Activated naive CD4-positive, alpha-beta T cell treated with anti-CD3 and anti-CD28 coated beads, Interleukin-2, amount 10 ng/mL, durations not matched to agents 7 days and 5 days (primary cell): ENCODE measurements at regions of chr3 and their contacts with region 1.

Region 1: DNA sequence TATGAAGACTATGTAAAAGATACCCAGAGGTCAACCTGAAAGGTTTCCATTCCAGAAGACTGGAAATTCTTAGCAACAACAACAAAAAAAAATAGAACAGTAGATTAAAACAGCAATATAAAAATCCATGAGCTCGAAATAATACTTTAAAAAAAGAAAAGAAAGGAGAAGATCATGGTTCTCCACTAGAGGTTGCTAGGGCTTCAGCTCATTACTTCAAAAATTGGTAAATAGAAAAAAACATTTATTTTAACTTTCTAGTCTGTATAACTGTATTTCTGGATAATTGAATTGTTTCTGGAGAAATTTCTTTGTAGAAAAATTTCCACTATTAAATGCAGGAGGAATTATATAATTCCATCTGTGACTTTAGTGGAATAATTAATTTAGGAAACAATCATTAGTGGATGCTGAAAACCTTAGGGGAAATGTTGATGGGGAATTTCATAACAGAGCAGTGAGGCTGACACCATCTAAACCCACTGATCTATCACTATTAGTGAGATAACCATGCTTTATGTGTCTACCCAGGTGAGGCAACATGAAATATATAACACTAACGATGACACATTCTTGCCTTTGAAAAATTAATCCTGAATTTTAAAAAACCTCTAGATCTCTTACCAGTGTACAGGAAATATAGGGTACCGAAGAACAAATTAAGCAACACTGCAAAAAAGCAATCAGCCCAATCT is 62.5 kb upstream of the SNRK start:
- DNase-seq: no peak
- H3K4me3 Mint-ChIP-seq: no peak overlapping the region
- H3K27ac Mint-ChIP-seq: no peak overlapping the region
- H3K4me1 Mint-ChIP-seq: peaks cover 47% of the 10 kb centered on the region
- H3K27me3 Mint-ChIP-seq: no peaks in the 10 kb centered on the region

Region 2: DNA sequence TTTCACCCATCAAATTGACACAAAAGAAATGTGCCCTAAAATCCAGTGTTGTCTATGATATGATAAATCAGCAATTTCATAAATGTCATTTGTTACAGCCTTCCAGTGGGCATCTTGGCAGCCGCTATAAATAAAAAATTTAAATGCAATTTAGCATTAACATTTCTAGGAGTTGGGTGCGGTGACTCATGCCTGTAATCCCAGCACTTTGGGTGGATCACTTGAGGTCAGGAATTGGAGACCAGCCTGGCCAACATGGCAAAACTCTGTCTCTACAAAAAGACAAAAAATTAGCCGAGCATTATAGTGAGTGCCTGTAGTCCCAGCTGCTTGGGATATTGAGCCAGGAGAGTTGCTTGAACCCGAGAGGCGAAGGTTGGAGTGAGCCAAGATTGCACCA is 52.0 kb before region 1 on chr3:
- CTCF ChIA-PET with region 1: no interaction called
- DNase-seq: no peak
- H3K4me3 Mint-ChIP-seq: no peak overlapping the region
- H3K27ac Mint-ChIP-seq: no peak overlapping the region
- H3K4me1 Mint-ChIP-seq: peaks cover 11% of the 10 kb centered on the region
- H3K27me3 Mint-ChIP-seq: peaks cover 10% of the 10 kb centered on the region

Region 3: DNA sequence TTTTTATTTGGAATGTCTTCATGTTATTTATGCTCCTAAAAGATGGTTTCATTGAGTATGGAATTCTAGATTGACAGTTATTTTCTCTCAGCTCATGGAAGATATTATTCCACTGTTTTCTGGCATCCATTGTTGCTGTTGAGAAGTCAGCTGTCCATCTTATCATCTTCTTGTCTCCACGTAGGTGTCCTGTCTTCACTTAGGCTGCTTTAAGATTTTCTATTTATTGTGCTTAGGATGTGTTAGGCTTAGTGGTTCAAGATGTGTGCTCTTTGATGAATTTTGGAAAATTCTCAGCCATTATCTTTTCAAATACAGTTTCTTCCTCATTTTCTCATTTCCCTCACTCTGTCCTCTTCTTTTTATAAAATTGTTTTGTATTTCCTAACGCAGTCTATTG is 114.5 kb after region 1 on chr3:
- CTCF ChIA-PET with region 1: no interaction called
- DNase-seq: no peak
- H3K4me3 Mint-ChIP-seq: no peak overlapping the region
- H3K27ac Mint-ChIP-seq: no peak overlapping the region
- H3K4me1 Mint-ChIP-seq: peaks cover 16% of the 10 kb centered on the region
- H3K27me3 Mint-ChIP-seq: no peaks in the 10 kb centered on the region

Region 4: GRCh38 chr3:43503067-43503728 is 279.4 kb after region 1 on chr3:
- CTCF ChIA-PET with region 1: interaction called, 25 read pairs
- DNase-seq: no peak
- H3K4me3 Mint-ChIP-seq: no peak overlapping the region
- H3K27ac Mint-ChIP-seq: no peak overlapping the region
- H3K4me1 Mint-ChIP-seq: peaks cover 43% of the 10 kb centered on the region
- H3K27me3 Mint-ChIP-seq: no peaks in the 10 kb centered on the region